Naive thymus-derived CD4-positive, alpha-beta T cell (primary cell): ENCODE measurements at regions of chr16 and their contacts with region 1.

Region 1: GRCh38 chr16:28211712-28212534 is at the start of gene XPO6:
- DNase-seq: peak; percentile 95 to 100 (median 98)
- ATAC-seq: peak; percentile 97
- H3K4me3 ChIP-seq: peak within 1 kb of the TSS; percentile 72
- H3K4me3 Mint-ChIP-seq: peak within 1 kb of the TSS; percentile 65 to 98 (median 93)
- H3K27ac ChIP-seq: peak within 1 kb of the TSS; percentile 85
- H3K27ac Mint-ChIP-seq: peak within 1 kb of the TSS; percentile 80 to 98 (median 94)
- H3K4me1 ChIP-seq: peaks cover 19 to 21% of the 10 kb centered on the region in 2 donors
- H3K4me1 Mint-ChIP-seq: peaks cover 8 to 39% (median 32%) of the 10 kb centered on the region in 7 donors
- H3K27me3 ChIP-seq: no peaks in the 10 kb centered on the region
- H3K27me3 Mint-ChIP-seq: no peaks in the 10 kb centered on the region
- total RNA-seq, gene XPO6: 232 to 437 (median 385) TPM

Region 2: DNA sequence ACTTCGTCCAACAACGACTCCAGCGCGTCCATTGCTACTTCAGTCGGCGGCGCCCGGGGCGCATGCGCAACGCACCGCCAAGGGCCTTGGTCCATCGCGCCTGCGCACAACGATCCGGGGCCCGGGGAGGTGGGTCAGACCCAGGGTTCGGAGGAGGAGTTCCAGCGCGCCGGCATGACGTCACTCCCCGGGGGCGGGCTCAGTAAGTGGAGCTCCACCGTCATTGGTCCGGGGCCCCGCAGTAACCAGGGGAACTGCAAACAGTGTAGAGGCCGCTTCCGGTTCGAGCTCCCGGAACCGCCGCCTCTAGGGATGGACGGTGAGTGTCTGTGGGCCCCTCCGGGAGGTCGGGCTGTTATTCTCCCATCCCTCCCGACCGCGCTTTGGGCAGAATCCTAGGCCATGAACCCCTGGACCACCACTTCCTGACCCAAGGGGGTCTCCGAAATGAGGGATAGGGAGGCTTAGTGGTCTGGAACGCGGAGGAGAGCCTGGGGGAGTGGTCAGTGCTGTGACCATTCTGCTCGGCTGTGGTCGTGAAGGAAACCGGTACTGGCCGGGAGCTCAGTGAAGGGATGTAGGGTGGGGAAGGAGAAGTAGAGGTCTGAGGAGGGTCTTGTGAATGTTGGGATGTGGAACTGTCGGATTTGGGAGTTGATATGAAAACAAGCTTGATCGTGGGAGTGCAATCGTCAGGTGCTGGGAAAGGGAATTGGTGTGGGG is 661.9 kb before region 1 on chr16 and contains the starts of genes GTF3C1 and KATNIP:
- CTCF ChIA-PET with region 1: no interaction called
- POLR2A ChIA-PET with region 1: no interaction called
- intact Hi-C with region 1: loop called (anchors 2 to 10 kb)
- DNase-seq: peak; percentile 100
- ATAC-seq: peak; percentile 100
- H3K4me3 ChIP-seq: peak within 1 kb of the TSS; percentile 100
- H3K4me3 Mint-ChIP-seq: peak within 1 kb of the TSS; percentile 95 to 98 (median 97)
- H3K27ac ChIP-seq: peak within 1 kb of the TSS; percentile 85
- H3K27ac Mint-ChIP-seq: peak within 1 kb of the TSS; percentile 94 to 99 (median 98)
- H3K4me1 ChIP-seq: peaks cover 21 to 22% of the 10 kb centered on the region in 2 donors
- H3K4me1 Mint-ChIP-seq: peaks cover 26 to 51% (median 44%) of the 10 kb centered on the region in 7 donors
- H3K27me3 ChIP-seq: no peaks in the 10 kb centered on the region
- H3K27me3 Mint-ChIP-seq: peaks cover 0 to 2% (median 0%) of the 10 kb centered on the region in 5 donors
- total RNA-seq, gene GTF3C1: 51.8 to 60.0 (median 52.6) TPM
- total RNA-seq, gene KATNIP: 18.7 to 39.0 (median 21.3) TPM

Region 3: DNA sequence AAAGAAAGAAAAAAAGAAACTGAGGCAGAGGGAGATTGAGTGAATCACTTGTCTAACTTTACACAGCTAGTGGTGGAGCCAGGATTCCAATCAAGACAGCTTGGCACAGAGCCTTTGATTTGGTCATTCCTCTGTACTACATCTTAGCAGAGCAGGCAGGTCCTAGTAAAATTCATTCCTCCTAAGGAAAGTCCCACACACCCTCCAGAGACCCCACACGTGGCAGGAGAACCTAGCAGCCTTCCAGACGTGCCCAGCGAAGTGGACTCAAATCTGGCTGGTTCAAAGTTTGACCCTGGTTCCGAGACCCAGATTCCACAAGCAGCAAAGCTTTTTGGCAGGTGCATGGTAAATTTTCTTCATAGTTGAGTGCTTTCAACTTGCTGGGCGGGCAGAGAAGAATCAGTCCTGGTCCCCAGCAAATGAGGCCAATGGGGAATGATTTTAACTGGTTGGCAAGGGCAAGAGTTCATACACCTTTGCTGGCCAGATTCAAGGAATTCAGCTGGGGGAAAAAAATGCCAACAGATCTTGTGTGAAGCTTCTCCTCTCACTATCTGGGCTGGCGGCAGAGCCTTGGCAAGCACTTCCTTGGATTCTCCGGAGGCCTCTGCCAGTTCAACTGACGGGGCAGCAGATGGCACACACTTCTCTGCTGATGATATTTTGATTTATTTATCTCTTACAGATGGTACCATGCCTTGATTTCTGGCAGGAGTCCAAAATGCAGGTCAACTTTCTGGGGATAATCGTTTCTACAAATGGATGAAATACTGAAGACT is 230.8 kb before region 1 on chr16:
- CTCF ChIA-PET with region 1: no interaction called
- POLR2A ChIA-PET with region 1: no interaction called
- intact Hi-C with region 1: no loop called
- DNase-seq: no peak
- ATAC-seq: no peak
- H3K4me3 ChIP-seq: no peak overlapping the region
- H3K4me3 Mint-ChIP-seq: no peak overlapping the region
- H3K27ac ChIP-seq: no peak overlapping the region
- H3K27ac Mint-ChIP-seq: no peak overlapping the region
- H3K4me1 ChIP-seq: no peaks in the 10 kb centered on the region
- H3K4me1 Mint-ChIP-seq: peaks cover 0 to 1% (median 0%) of the 10 kb centered on the region in 7 donors
- H3K27me3 ChIP-seq: no peaks in the 10 kb centered on the region
- H3K27me3 Mint-ChIP-seq: peaks cover 2 to 26% (median 12%) of the 10 kb centered on the region in 5 donors

Region 4: DNA sequence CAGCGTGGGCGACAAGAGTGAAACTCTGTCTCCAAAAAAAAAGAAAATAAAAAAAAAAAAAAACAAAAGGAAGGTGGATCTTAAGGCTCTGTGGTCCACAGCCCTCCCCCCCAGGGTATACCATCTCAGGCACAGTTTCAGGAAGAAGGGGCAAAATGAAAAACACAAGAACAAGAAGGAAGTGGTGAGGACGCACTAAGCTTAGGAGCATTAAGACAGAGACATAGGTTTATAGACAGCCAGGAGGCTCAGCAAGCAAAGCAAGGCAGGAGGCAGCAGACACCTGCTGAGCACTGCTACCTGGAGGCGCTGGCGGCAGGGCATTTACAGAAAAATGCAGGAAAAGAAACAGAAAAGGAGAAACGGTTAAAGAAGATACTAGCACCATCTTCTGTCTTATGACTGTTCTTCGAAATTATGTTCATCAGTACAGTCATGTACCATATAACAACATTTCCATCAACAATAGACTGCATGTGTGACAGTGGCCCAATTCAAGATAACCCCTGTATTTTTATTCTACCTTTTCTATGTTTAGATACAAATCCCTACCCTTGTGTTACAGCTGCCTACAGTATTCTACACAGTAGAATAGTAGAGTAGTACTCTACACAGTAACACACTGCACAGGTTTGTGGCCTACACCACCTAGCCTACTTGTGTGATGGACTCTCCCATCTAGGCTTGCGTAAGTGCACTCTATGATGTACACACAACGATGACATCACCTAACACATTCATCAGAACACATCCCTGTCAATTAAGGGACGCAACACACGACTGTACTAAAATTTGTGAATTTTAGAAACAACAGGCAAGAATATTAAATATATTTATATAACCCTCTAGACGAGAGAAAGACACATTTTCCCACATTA is 62.7 kb before region 1 on chr16:
- CTCF ChIA-PET with region 1: interaction called, 26 read pairs
- POLR2A ChIA-PET with region 1: interaction called, 92 read pairs
- intact Hi-C with region 1: no loop called
- DNase-seq: peak in 7 of 9 donors; percentile 49 to 79 (median 73)
- ATAC-seq: peak; percentile 86
- H3K4me3 ChIP-seq: no peak overlapping the region
- H3K4me3 Mint-ChIP-seq: peak overlapping the region; percentile 49 to 81 (median 69)
- H3K27ac ChIP-seq: peak overlapping the region; percentile 61
- H3K27ac Mint-ChIP-seq: peak overlapping the region; percentile 86 to 99 (median 94)
- H3K4me1 ChIP-seq: peaks cover 32 to 66% of the 10 kb centered on the region in 2 donors
- H3K4me1 Mint-ChIP-seq: peaks cover 47 to 97% (median 88%) of the 10 kb centered on the region in 7 donors
- H3K27me3 ChIP-seq: no peaks in the 10 kb centered on the region
- H3K27me3 Mint-ChIP-seq: no peaks in the 10 kb centered on the region

Region 5: GRCh38 chr16:28181515-28181914 is 30.4 kb before region 1 on chr16:
- CTCF ChIA-PET with region 1: interaction called, 5 read pairs
- POLR2A ChIA-PET with region 1: interaction called, 47 read pairs
- intact Hi-C with region 1: no loop called
- DNase-seq: no peak
- ATAC-seq: no peak
- H3K4me3 ChIP-seq: no peak overlapping the region
- H3K4me3 Mint-ChIP-seq: peak overlapping the region; percentile 21 to 77 (median 66)
- H3K27ac ChIP-seq: peak overlapping the region; percentile 59
- H3K27ac Mint-ChIP-seq: peak overlapping the region; percentile 62 to 96 (median 89)
- H3K4me1 ChIP-seq: peaks cover 38 to 58% of the 10 kb centered on the region in 2 donors
- H3K4me1 Mint-ChIP-seq: peaks cover 66 to 97% (median 86%) of the 10 kb centered on the region in 7 donors
- H3K27me3 ChIP-seq: no peaks in the 10 kb centered on the region
- H3K27me3 Mint-ChIP-seq: no peaks in the 10 kb centered on the region

Region 6: DNA sequence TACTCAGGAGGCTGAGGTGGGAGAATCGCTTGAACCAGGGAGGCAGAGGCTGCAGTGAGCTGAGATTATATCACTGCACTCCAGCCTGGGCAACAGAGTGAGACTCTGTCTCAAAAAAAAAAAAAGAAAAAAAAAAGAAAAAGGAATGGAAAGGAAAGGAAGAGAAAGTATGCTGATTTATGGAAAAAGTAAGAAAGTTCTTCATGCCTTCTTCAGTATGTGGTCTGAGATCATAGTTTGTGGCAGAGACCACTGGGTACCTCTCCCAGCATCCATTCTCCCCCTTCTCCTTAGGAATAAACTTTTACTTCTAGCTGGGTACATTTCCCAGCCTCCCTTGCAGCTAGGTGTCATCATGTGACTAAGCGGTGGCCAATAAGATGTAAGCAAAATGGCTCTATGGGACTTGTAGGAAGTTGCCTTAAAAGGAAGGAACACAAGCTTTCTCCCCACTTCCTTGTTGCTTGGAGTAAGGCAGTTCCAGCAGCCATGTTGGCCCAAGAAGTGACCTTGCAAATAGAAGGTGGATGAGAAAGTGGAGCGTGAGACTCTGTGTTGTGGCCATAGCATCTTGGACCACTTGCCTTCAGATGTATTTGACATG is 25.9 kb after region 1 on chr16:
- CTCF ChIA-PET with region 1: no interaction called
- POLR2A ChIA-PET with region 1: no interaction called
- intact Hi-C with region 1: no loop called
- DNase-seq: no peak
- ATAC-seq: no peak
- H3K4me3 ChIP-seq: no peak overlapping the region
- H3K4me3 Mint-ChIP-seq: no peak overlapping the region
- H3K27ac ChIP-seq: no peak overlapping the region
- H3K27ac Mint-ChIP-seq: no peak overlapping the region
- H3K4me1 ChIP-seq: no peaks in the 10 kb centered on the region
- H3K4me1 Mint-ChIP-seq: no peaks in the 10 kb centered on the region
- H3K27me3 ChIP-seq: no peaks in the 10 kb centered on the region
- H3K27me3 Mint-ChIP-seq: peaks cover 0 to 2% (median 0%) of the 10 kb centered on the region in 5 donors

Region 7: GRCh38 chr16:28277537-28278388 is 65.8 kb after region 1 on chr16:
- CTCF ChIA-PET with region 1: interaction called, 11 read pairs
- POLR2A ChIA-PET with region 1: interaction called, 25 read pairs
- intact Hi-C with region 1: no loop called
- DNase-seq: peak; percentile 70 to 88 (median 82)
- ATAC-seq: peak; percentile 95
- H3K4me3 ChIP-seq: peak overlapping the region; percentile 82
- H3K4me3 Mint-ChIP-seq: peak overlapping the region; percentile 75 to 86 (median 84)
- H3K27ac ChIP-seq: peak overlapping the region; percentile 73
- H3K27ac Mint-ChIP-seq: peak overlapping the region; percentile 88 to 99 (median 94)
- H3K4me1 ChIP-seq: peaks cover 21 to 30% of the 10 kb centered on the region in 2 donors
- H3K4me1 Mint-ChIP-seq: peaks cover 31 to 61% (median 44%) of the 10 kb centered on the region in 7 donors
- H3K27me3 ChIP-seq: no peaks in the 10 kb centered on the region
- H3K27me3 Mint-ChIP-seq: peaks cover 0 to 30% (median 0%) of the 10 kb centered on the region in 5 donors

Region 8: DNA sequence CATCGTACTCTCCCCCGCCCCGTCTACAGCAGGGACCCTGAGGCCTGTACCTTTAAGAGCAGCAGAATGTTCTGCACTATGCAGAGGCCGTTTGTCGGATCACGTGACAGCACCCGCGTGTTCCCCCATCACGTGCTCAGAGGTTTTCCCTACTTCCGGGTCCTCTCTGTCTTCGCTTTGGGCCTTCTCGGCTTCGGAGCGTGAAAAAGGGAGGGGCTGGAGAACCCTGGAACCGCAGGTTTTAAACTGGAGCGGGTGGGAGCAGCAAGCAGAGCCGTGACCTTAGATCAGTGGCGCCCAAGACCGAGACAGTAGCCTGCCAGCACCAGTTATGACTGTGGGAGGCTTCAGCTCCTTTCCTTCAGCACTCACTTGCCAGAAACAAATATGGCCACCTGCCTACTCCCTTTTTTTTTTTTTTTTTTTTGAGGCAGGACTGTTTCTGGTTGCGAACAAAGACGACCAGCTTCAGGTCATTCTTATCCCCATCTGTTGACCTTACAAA is 280.1 kb after region 1 on chr16 and contains the start of gene CLN3:
- CTCF ChIA-PET with region 1: no interaction called
- POLR2A ChIA-PET with region 1: no interaction called
- intact Hi-C with region 1: loop called in 1 of 2 experiments (anchors 10 kb)
- DNase-seq: peak; percentile 73 to 95 (median 93)
- ATAC-seq: peak; percentile 78
- H3K4me3 ChIP-seq: peak within 1 kb of the TSS; percentile 98
- H3K4me3 Mint-ChIP-seq: peak within 1 kb of the TSS; percentile 95 to 100 (median 98)
- H3K27ac ChIP-seq: peak within 1 kb of the TSS; percentile 95
- H3K27ac Mint-ChIP-seq: peak within 1 kb of the TSS; percentile 99 to 100 (median 100)
- H3K4me1 ChIP-seq: peaks cover 31 to 40% of the 10 kb centered on the region in 2 donors
- H3K4me1 Mint-ChIP-seq: peaks cover 41 to 77% (median 62%) of the 10 kb centered on the region in 7 donors
- H3K27me3 ChIP-seq: no peaks in the 10 kb centered on the region
- H3K27me3 Mint-ChIP-seq: no peaks in the 10 kb centered on the region
- total RNA-seq, gene CLN3: 56.5 to 76.3 (median 70.7) TPM